ENCODE measurements at regions of chr6 and their contacts with region 1.

Region 1: DNA sequence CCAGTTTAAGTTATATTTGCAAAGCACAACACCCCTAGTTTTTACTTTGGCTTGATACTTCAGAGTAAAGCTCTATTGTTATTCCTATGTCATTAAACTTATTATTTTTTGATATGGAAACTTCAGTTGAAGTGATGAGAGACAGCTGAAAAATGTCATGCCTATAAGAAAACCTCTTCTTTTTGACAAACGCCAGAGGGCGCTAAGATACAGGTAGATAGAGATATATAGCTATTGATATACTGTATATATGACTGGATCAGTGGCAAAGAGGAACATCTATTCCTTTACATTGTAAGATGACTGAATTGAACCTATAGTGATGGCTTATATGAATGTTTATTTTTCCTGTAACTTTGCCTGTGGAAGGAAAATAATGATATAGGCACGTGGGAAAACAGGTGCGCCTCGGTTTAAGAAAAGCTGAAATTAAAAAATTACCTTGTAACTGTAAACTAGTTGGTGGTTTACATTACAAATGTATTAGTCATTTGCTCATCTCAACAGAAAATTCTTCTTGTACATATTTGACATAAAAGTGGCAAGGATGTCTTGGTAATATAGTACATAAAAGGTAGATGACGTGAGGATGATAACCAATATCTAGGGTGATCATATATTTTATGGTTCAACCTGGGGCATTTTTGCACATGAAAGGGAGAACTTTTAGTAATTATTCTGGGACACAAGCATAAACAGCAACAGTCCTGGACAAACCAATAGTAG is 74.1 kb downstream of the LAMA4 start:
- DNase-seq: peak in 2 of 5 donors; percentile 44 to 60
- ATAC-seq: peak in 3 of 4 donors; percentile 55 to 69 (median 67)
- H3K4me3 ChIP-seq: no peak overlapping the region
- H3K27ac ChIP-seq: no peak overlapping the region
- H3K4me1 ChIP-seq: peaks cover 0 to 15% (median 2%) of the 10 kb centered on the region in 12 donors
- H3K27me3 ChIP-seq: no peaks in the 10 kb centered on the region
- CTCF ChIP-seq: peak; percentile 61 to 92 (median 78)
- POLR2A ChIP-seq: no peak

Region 2: GRCh38 chr6:111922454-111923297 is 257.6 kb before region 1 on chr6:
- intact Hi-C with region 1: no loop called
- DNase-seq: no peak
- ATAC-seq: no peak
- H3K4me3 ChIP-seq: no peak overlapping the region
- H3K27ac ChIP-seq: no peak overlapping the region
- H3K4me1 ChIP-seq: peaks cover 0 to 17% (median 0%) of the 10 kb centered on the region in 12 donors
- H3K27me3 ChIP-seq: no peaks in the 10 kb centered on the region
- CTCF ChIP-seq: no peak
- POLR2A ChIP-seq: no peak

Region 3: DNA sequence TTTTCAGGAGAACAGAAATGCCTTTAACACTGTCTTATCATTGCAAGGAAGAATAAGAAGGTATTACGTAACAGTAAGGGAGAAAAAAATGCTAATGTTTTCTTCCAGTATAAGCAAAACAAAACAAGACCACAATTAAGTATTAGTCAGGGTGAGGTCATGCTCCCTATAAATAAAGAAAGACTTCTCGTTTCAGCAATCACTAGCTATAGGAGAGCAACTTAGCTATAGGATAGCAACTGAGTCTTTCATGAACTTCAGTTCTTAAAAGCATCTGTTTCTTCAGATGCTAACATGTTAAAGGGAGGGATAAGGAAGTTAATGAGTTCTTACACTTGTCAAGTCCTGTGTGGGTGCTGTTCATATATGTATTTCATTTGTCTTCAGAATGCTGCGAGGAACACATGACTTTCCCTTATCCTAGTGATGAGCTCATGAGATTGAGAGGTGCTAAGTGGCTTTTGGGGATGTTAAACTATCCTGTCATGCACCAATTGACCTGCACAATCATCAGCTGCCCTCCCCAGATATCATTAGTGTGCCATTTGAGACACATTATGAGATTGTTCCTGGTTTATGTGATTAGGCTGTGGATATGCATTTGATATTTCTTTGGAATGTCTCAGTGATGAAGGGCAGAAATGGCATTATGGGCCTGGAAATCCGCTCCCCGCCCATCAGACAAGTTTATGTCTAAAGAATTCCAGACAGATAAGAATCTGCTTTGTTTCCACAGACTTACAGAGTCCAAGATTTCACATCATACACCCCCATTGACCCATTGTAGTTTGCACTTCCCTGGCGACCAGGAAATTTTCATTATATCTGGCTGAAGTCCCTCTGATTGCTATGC is 36.7 kb after region 1 on chr6:
- intact Hi-C with region 1: no loop called
- DNase-seq: no peak
- ATAC-seq: peak; percentile 9 to 56 (median 14)
- H3K4me3 ChIP-seq: no peak overlapping the region
- H3K27ac ChIP-seq: peak overlapping the region; percentile 22 to 87 (median 52)
- H3K4me1 ChIP-seq: peaks cover 19 to 90% (median 74%) of the 10 kb centered on the region in 12 donors
- H3K27me3 ChIP-seq: no peaks in the 10 kb centered on the region
- CTCF ChIP-seq: no peak
- POLR2A ChIP-seq: no peak

Region 4: DNA sequence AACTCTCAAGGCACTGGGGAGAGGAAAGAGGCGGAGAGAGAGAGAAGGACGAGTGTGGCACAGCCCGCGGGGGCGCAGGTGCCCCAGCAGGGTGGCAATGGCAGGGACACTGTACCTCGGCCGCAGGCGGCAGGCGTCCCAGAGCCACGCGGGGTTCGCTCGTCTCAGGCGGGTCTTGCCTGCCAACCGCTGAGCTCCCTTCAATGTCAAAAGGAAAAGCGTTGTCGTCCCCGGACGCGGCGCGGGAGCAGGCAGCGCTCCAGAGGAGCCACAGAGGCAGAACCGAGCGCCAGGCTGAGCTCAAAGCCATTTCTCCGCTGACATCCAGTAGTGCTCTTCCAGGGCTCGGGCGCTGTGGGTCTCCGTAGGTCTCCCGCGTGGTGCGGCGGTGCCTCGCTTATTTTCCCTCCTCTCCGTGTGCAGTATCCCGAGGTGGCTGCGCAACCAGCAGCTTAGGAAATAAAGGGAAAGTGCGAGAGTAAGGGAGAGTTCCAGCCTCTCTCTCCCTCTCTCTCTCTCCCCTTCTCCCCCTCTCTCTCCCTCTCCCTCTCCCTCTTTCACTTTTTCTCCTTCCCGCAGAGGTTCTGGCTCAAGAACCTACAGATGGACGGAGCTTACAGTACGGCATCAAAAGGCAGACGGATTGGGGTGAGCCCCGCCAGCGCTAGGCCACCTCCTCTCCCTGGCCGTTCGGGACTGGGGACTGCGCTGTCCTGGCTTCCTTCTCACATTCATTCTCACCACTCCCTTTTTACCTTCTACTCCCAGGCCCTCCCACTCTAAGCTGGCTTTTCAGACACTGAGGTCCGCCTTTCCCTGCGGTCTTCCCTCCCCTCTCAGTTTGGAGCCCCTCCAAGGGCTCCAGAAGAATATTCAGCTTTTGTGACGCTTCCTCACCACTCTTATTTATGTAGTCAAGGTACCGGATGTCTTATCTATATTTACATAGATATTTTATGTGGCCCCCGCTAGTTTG is 73.9 kb after region 1 on chr6 and contains the start of gene LAMA4:
- intact Hi-C with region 1: loop called in 3 of 10 experiments (anchors 5 to 10 kb)
- DNase-seq: peak; percentile 65 to 82 (median 71)
- ATAC-seq: peak; percentile 60 to 78 (median 74)
- H3K4me3 ChIP-seq: peak within 1 kb of the TSS; percentile 53 to 97 (median 73)
- H3K27ac ChIP-seq: peak within 1 kb of the TSS; percentile 86 to 98 (median 95)
- H3K4me1 ChIP-seq: peaks cover 6 to 54% (median 31%) of the 10 kb centered on the region in 12 donors
- H3K27me3 ChIP-seq: peaks cover 0 to 7% (median 0%) of the 10 kb centered on the region in 9 donors
- CTCF ChIP-seq: peak in 1 of 12 donors; percentile 4
- POLR2A ChIP-seq: peak in 1 of 2 donors; percentile 73
- total RNA-seq, gene LAMA4: 42.6 to 132 (median 77.7) TPM

Region 5: DNA sequence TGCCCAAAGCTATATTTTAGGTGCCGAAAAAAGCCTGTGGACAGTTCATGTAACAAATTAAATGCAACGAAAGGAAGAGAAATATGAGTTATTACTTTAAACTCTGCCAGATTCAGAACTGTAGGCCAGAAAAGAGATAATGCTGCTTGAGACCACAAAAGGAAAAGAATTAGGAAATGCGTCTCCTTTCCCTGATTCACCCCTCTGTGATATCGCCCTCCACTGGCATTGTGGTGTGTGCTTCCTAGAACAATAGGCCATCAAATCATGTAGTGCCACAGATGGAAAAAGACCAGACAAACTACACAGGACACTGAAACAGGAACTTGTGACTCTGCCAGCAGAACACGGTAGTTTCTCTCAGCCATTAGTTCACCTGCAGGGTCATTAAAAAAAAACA is 88.9 kb after region 1 on chr6:
- intact Hi-C with region 1: loop called in 2 of 10 experiments (anchors 1 to 2 kb)
- DNase-seq: peak in 1 of 5 donors; percentile 34
- ATAC-seq: peak; percentile 57 to 75 (median 66)
- H3K4me3 ChIP-seq: no peak overlapping the region
- H3K27ac ChIP-seq: peak overlapping the region; percentile 6 to 80 (median 70)
- H3K4me1 ChIP-seq: peaks cover 0 to 31% (median 22%) of the 10 kb centered on the region in 12 donors
- H3K27me3 ChIP-seq: no peaks in the 10 kb centered on the region
- CTCF ChIP-seq: peak in 9 of 12 donors; percentile 11 to 58 (median 42)
- POLR2A ChIP-seq: no peak

Region 6: DNA sequence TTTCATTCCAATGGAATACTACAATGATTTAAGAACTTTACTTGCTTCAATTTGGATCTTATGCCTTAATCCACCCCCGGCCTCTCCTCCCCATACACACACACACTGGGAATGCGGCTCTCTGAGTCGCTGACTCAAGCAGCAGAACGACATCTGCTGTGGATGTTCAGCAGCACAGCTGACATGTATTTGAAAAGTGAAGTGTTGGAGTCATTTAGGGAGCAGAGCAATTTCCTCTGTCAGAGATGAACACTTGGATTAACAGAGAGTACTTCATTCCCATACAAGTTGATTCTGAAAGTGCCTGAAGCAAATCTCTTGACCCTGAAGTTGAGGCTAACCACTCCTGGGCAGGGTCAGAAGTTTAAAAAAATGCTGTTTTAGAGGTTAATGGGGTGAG is 102.0 kb after region 1 on chr6:
- intact Hi-C with region 1: loop called in 7 of 10 experiments (anchors 1 to 10 kb)
- DNase-seq: peak in 4 of 5 donors; percentile 72 to 82 (median 78)
- ATAC-seq: peak; percentile 84 to 96 (median 94)
- H3K4me3 ChIP-seq: no peak overlapping the region
- H3K27ac ChIP-seq: peak overlapping the region in 11 of 12 donors; percentile 10 to 70 (median 45)
- H3K4me1 ChIP-seq: peaks cover 0 to 57% (median 35%) of the 10 kb centered on the region in 12 donors
- H3K27me3 ChIP-seq: no peaks in the 10 kb centered on the region
- CTCF ChIP-seq: peak in 11 of 12 donors; percentile 25 to 80 (median 52)
- POLR2A ChIP-seq: no peak

Region 7: DNA sequence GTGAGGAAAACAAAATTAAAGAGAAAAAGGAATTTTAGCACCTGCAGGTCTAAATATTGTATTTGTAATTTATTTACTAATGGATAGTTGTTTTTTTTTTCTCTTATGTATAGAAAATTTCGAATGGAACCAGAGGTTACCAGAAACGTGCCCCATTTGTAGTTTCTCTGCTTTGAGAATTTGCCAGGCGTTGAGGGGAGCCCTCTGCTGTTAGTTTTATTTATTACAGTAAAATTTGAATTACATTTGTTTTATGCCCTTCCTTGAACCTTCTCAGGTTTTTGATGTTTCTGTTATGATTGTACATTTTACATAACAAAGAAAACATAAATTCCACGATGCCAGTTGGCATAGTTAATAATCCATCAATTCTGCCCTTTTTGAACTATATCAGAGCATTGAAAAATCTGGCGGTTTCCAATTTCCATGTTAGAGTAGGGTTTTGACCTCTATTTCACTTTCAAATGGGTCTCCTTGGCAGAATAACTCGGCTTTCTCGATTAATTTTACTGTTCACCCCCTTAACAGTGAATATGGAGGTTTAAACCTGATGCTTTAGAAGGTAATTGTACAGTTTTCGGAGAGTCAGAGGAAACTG is 131.8 kb after region 1 on chr6:
- intact Hi-C with region 1: loop called (anchors 1 to 2 kb)
- DNase-seq: no peak
- ATAC-seq: peak in 1 of 4 donors; percentile 66
- H3K4me3 ChIP-seq: no peak overlapping the region
- H3K27ac ChIP-seq: no peak overlapping the region
- H3K4me1 ChIP-seq: peaks cover 0 to 30% (median 6%) of the 10 kb centered on the region in 12 donors
- H3K27me3 ChIP-seq: no peaks in the 10 kb centered on the region
- CTCF ChIP-seq: peak; percentile 66 to 88 (median 74)
- POLR2A ChIP-seq: no peak

Region 8: GRCh38 chr6:112372226-112372806 is 192.1 kb after region 1 on chr6:
- intact Hi-C with region 1: loop called in 3 of 10 experiments (anchors 5 kb)
- DNase-seq: no peak
- ATAC-seq: peak in 3 of 4 donors; percentile 48 to 51 (median 48)
- H3K4me3 ChIP-seq: no peak overlapping the region
- H3K27ac ChIP-seq: no peak overlapping the region
- H3K4me1 ChIP-seq: peaks cover 0 to under 1% (median 0%) of the 10 kb centered on the region in 12 donors
- H3K27me3 ChIP-seq: peaks cover 0 to 9% (median under 1%) of the 10 kb centered on the region in 9 donors
- CTCF ChIP-seq: peak in 11 of 12 donors; percentile 25 to 63 (median 47)
- POLR2A ChIP-seq: no peak

Measured in heart left ventricle (tissue), 16 donors.